ENCODE measurements at regions of chr17 and their contacts with region 1.

Region 1: DNA sequence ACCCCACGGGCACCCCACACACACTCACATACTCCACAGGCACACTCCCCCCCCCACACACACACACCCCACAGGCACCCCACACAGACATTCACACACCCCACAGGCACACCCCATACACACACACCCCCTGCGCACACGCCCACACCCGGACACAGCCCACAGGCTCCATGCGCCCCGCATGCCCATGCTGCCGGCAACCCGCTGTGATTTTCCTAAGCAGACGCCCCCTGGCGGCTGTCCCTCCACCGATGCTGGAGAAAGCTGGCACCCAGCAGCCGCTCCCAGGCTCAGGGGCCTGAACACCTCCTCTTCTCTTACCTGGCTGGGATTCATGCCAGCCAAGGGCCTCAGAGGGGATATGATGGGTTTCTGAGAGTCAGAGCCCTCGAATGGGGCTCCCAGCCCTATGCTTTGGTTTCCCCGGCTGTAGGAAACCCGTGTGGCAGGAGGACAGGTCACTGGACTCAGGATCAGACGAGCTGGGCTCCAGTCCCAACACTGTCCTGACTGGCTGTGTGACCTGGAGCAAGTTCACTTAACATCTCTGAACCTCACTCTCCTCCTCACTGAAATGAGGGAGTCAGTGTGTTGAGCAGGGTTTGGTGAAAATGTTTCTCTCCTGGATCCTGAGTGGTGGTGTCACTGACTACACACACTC is 19.6 kb upstream of the TNFRSF13B start:
- DNase-seq: peak; percentile 62 to 84 (median 68)
- H3K4me3 ChIP-seq: no peak overlapping the region
- H3K4me3 Mint-ChIP-seq: peak overlapping the region in 1 of 7 donors; percentile 33
- H3K27ac ChIP-seq: no peak overlapping the region
- H3K27ac Mint-ChIP-seq: peak overlapping the region in 3 of 8 donors; percentile 70 to 97 (median 93)
- H3K4me1 ChIP-seq: peaks cover 41% of the 10 kb centered on the region
- H3K4me1 Mint-ChIP-seq: peaks cover 30 to 39% (median 32%) of the 10 kb centered on the region in 3 donors
- H3K27me3 ChIP-seq: no peaks in the 10 kb centered on the region
- H3K27me3 Mint-ChIP-seq: no peaks in the 10 kb centered on the region

Region 2: GRCh38 chr17:16888413-16889087 is 102.9 kb before region 1 on chr17:
- CTCF ChIA-PET with region 1: no interaction called
- POLR2A ChIA-PET with region 1: no interaction called
- DNase-seq: no peak
- H3K4me3 ChIP-seq: no peak overlapping the region
- H3K4me3 Mint-ChIP-seq: no peak overlapping the region
- H3K27ac ChIP-seq: no peak overlapping the region
- H3K27ac Mint-ChIP-seq: peak overlapping the region in 1 of 8 donors; percentile 49
- H3K4me1 ChIP-seq: no peaks in the 10 kb centered on the region
- H3K4me1 Mint-ChIP-seq: no peaks in the 10 kb centered on the region
- H3K27me3 ChIP-seq: no peaks in the 10 kb centered on the region
- H3K27me3 Mint-ChIP-seq: peaks cover 0 to 2% of the 10 kb centered on the region in 2 donors

Region 3: GRCh38 chr17:17001874-17002520 is 10.5 kb after region 1 on chr17:
- CTCF ChIA-PET with region 1: interaction called, 11 read pairs
- POLR2A ChIA-PET with region 1: no interaction called
- DNase-seq: peak; percentile 63 to 78 (median 69)
- H3K4me3 ChIP-seq: no peak overlapping the region
- H3K4me3 Mint-ChIP-seq: peak overlapping the region in 1 of 7 donors; percentile 80
- H3K27ac ChIP-seq: no peak overlapping the region
- H3K27ac Mint-ChIP-seq: peak overlapping the region in 1 of 8 donors; percentile 29
- H3K4me1 ChIP-seq: no peaks in the 10 kb centered on the region
- H3K4me1 Mint-ChIP-seq: peaks cover 2 to 4% (median 3%) of the 10 kb centered on the region in 3 donors
- H3K27me3 ChIP-seq: no peaks in the 10 kb centered on the region
- H3K27me3 Mint-ChIP-seq: peaks cover 3 to 11% of the 10 kb centered on the region in 2 donors